CD8-positive, alpha-beta T cell (primary cell): ENCODE measurements at regions of chr12 and their contacts with region 1.

Region 1: DNA sequence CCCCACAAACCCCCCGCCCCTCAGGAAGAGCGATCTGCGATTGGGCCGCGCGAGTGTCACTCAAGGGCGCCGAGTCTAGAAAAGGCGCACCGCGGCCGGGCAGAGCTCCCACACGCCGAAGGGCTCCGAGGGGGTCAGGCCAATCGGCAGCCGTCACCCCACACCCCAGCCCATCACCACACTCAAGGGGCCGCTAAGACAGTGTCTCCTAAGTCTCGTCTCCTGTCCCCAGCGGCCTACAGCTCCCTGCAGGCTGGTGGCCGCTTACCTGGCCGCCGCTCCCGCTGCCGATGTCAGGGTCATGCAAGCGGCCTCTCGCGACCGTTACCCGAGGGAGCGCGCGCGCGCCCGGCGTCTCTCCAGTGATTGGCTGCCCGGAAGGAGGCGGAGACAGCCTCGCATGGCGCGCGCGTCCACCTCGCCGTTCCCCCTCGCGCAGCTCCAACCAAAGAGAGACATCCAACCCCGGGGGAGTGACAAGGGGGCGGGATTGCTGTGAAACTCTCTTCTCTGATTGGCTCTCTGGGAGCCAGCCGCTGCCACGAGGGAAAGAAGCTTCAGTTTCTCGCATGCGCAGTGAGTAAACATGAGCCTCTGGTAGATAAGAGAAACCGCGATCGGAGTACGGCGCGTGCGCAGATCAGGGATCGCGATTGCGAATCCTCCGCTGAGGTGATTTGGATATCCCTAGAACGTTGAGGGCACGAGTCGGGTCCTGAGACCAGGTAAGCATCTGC is at the starts of genes MPHOSPH9 and MTRFR:
- DNase-seq: peak; percentile 96 to 100 (median 98)
- ATAC-seq: peak; percentile 90
- H3K4me3 ChIP-seq: peak within 1 kb of the TSS; percentile 98 to 99
- H3K4me3 Mint-ChIP-seq: peak within 1 kb of the TSS; percentile 94
- H3K27ac ChIP-seq: peak within 1 kb of the TSS; percentile 91 to 94
- H3K27ac Mint-ChIP-seq: peak within 1 kb of the TSS; percentile 100
- H3K4me1 ChIP-seq: peaks cover 80% of the 10 kb centered on the region
- H3K4me1 Mint-ChIP-seq: peaks cover 74% of the 10 kb centered on the region
- H3K27me3 ChIP-seq: no peaks in the 10 kb centered on the region
- H3K27me3 Mint-ChIP-seq: no peaks in the 10 kb centered on the region
- CTCF ChIP-seq: no peak
- total RNA-seq, gene MPHOSPH9: 82.2 to 84.4 TPM
- total RNA-seq, gene MTRFR: 37.7 to 39.4 TPM

Region 2: GRCh38 chr12:122526683-122527477 is 706.1 kb before region 1 on chr12 and contains the starts of genes KNTC1 and RSRC2:
- CTCF ChIA-PET with region 1: no interaction called
- POLR2A ChIA-PET with region 1: interaction called, 6 read pairs
- intact Hi-C with region 1: loop called (anchors 2 to 10 kb)
- DNase-seq: peak; percentile 94 to 100 (median 96)
- ATAC-seq: peak; percentile 94
- H3K4me3 ChIP-seq: peak within 1 kb of the TSS; percentile 70 to 72
- H3K4me3 Mint-ChIP-seq: no peak within 1 kb of the TSS
- H3K27ac ChIP-seq: peak within 1 kb of the TSS; percentile 96 to 99
- H3K27ac Mint-ChIP-seq: peak within 1 kb of the TSS; percentile 15
- H3K4me1 ChIP-seq: peaks cover 35% of the 10 kb centered on the region
- H3K4me1 Mint-ChIP-seq: peaks cover 34% of the 10 kb centered on the region
- H3K27me3 ChIP-seq: no peaks in the 10 kb centered on the region
- H3K27me3 Mint-ChIP-seq: no peaks in the 10 kb centered on the region
- CTCF ChIP-seq: no peak
- total RNA-seq, gene KNTC1: 14.1 to 15.1 TPM
- total RNA-seq, gene RSRC2: 325 to 333 TPM

Region 3: GRCh38 chr12:122895705-122896636 is 337.0 kb before region 1 on chr12 and contains the start of gene VPS37B:
- CTCF ChIA-PET with region 1: no interaction called
- POLR2A ChIA-PET with region 1: interaction called, 4 read pairs
- intact Hi-C with region 1: loop called in 1 of 2 experiments (anchors 5 kb)
- DNase-seq: peak; percentile 79 to 96 (median 91)
- ATAC-seq: peak; percentile 63
- H3K4me3 ChIP-seq: peak within 1 kb of the TSS; percentile 80 to 93
- H3K4me3 Mint-ChIP-seq: peak within 1 kb of the TSS; percentile 91
- H3K27ac ChIP-seq: peak within 1 kb of the TSS; percentile 92 to 96
- H3K27ac Mint-ChIP-seq: peak within 1 kb of the TSS; percentile 99
- H3K4me1 ChIP-seq: peaks cover 82% of the 10 kb centered on the region
- H3K4me1 Mint-ChIP-seq: peaks cover 89% of the 10 kb centered on the region
- H3K27me3 ChIP-seq: no peaks in the 10 kb centered on the region
- H3K27me3 Mint-ChIP-seq: no peaks in the 10 kb centered on the region
- CTCF ChIP-seq: no peak
- total RNA-seq, gene VPS37B: 145 to 148 TPM

Region 4: DNA sequence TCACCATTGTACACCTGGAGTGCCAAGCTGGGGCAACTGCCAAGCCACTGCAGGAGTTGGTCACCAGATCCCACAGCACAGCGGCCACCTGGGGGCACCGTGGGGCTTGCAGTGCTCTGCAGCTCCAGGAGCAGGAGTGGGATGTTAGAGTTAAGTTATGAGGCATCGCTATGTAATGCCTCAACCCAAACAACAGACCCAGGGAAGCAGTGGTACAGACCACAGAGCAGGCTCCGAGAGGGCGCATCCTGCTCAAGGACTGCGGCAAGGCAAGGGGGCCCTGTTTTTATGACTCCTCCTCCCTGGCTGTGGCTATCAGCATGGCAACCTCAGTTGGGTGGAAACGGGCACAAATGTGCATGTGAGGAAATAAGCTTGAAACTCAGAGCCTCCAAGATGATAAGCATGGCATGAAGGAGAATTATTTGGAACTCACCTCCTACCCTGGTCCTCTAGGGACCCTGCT is 189.4 kb before region 1 on chr12:
- CTCF ChIA-PET with region 1: interaction called, 49 read pairs
- POLR2A ChIA-PET with region 1: interaction called, 17 read pairs
- intact Hi-C with region 1: loop called (anchors 1 kb)
- DNase-seq: peak; percentile 37 to 88 (median 73)
- ATAC-seq: peak; percentile 98
- H3K4me3 ChIP-seq: no peak overlapping the region
- H3K4me3 Mint-ChIP-seq: peak overlapping the region; percentile 37
- H3K27ac ChIP-seq: peak overlapping the region; percentile 43 to 48
- H3K27ac Mint-ChIP-seq: peak overlapping the region; percentile 91
- H3K4me1 ChIP-seq: peaks cover 18% of the 10 kb centered on the region
- H3K4me1 Mint-ChIP-seq: peaks cover 30% of the 10 kb centered on the region
- H3K27me3 ChIP-seq: no peaks in the 10 kb centered on the region
- H3K27me3 Mint-ChIP-seq: no peaks in the 10 kb centered on the region
- CTCF ChIP-seq: peak; percentile 58

Region 5: GRCh38 chr12:123180171-123180570 is 52.8 kb before region 1 on chr12:
- CTCF ChIA-PET with region 1: interaction called, 10 read pairs
- POLR2A ChIA-PET with region 1: no interaction called
- intact Hi-C with region 1: no loop called
- DNase-seq: no peak
- ATAC-seq: no peak
- H3K4me3 ChIP-seq: no peak overlapping the region
- H3K4me3 Mint-ChIP-seq: no peak overlapping the region
- H3K27ac ChIP-seq: no peak overlapping the region
- H3K27ac Mint-ChIP-seq: no peak overlapping the region
- H3K4me1 ChIP-seq: no peaks in the 10 kb centered on the region
- H3K4me1 Mint-ChIP-seq: no peaks in the 10 kb centered on the region
- H3K27me3 ChIP-seq: no peaks in the 10 kb centered on the region
- H3K27me3 Mint-ChIP-seq: no peaks in the 10 kb centered on the region
- CTCF ChIP-seq: no peak

Region 6: DNA sequence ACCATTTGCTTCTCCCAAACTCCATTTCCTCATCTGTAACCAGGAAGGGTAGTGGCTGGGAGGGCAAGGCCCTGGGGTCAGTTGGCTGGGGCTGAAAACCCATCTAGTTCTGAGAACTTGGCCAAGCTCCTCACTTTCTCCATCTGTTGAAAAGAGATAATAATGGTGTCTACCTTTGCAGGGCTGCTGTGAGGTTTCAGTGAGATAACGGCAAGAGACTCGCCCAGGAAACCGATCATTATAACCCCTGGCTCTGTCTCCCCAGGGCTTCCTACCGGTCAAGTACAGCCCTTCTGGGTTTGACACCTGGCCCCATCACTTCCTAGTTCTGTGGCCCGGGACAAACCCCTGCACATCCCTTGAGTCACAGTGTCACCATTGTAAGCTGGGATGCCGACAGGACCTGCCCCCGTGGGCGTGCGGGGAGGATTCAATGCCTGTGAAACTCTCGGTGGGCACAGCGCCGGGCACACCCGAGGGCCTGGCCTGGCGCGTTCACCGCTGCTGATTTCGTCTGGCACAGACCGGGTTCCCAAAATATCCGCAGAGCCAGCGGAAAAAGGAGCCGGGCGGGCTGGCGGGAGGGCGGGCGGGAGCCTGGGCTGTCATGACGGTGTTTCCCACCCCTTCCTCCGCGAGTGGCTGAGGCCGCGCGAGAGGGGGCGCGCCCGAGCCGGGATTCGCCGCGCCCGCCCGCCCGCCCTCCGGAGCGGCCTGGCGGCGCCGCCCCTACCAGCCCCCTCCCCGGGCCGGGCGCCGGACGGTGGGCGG is 155.4 kb after region 1 on chr12:
- CTCF ChIA-PET with region 1: no interaction called
- POLR2A ChIA-PET with region 1: interaction called, 6 read pairs
- intact Hi-C with region 1: loop called in 1 of 2 experiments (anchors 5 kb)
- DNase-seq: peak; percentile 41 to 88 (median 72)
- ATAC-seq: peak; percentile 66
- H3K4me3 ChIP-seq: peak overlapping the region; percentile 42 to 64
- H3K4me3 Mint-ChIP-seq: peak overlapping the region; percentile 88
- H3K27ac ChIP-seq: peak overlapping the region; percentile 33 to 79
- H3K27ac Mint-ChIP-seq: peak overlapping the region; percentile 91
- H3K4me1 ChIP-seq: peaks cover 22% of the 10 kb centered on the region
- H3K4me1 Mint-ChIP-seq: peaks cover 32% of the 10 kb centered on the region
- H3K27me3 ChIP-seq: no peaks in the 10 kb centered on the region
- H3K27me3 Mint-ChIP-seq: no peaks in the 10 kb centered on the region
- CTCF ChIP-seq: no peak